ENCODE measurements at regions of chr17 and their contacts with region 1.

Region 1: GRCh38 chr17:31394544-31394943 is 3.1 kb downstream of the RAB11FIP4 start:
- DNase-seq: peak in 7 of 10 donors; percentile 20 to 77 (median 68)
- H3K4me3 ChIP-seq: peak overlapping the region in 48 of 59 donors; percentile 7 to 86 (median 70)
- H3K27ac ChIP-seq: peak overlapping the region in 24 of 59 donors; percentile 1 to 91 (median 82)
- H3K27me3 ChIP-seq: peaks cover 0 to 6% (median 0%) of the 10 kb centered on the region in 45 donors
- CTCF ChIP-seq: peak in 1 of 56 donors; percentile 15

Region 2: DNA sequence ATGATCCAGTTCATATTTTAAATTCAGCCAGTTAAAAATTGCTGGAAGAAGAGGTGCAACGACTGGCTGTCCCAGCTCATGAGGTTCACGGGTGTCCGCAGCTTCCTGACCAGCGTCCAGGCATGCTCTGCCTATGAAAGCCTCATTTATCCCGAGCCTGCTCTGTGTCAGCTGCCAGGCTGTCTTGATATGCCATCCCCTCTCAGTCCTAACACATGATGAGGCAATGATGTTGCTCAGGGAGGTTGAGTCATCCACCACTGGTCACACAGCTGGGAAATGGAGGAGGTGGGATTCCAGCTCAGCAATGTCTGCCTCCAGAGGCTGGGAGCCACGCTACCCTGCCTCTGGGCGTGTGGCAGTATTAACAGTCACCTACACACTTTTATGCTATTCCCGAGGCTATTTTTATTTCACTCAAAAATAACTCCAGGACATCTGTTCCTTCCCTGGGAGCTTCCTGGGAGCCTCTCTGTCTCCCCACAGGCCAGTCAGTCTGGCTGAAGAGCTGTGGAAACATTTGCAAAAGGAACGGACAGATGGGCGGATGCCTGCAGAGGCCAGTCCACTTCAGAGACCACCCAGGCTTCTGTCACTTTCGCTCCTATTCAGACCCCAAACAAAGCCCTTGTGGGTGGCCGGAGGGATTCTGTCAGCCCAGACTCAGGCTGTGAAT is 19.5 kb after region 1 on chr17:
- intact Hi-C with region 1: loop called in 1 of 2 experiments (anchors 2 kb)
- DNase-seq: peak in 9 of 10 donors; percentile 67 to 93 (median 92)
- H3K4me3 ChIP-seq: peak overlapping the region in 9 of 59 donors; percentile 5 to 24 (median 13)
- H3K27ac ChIP-seq: peak overlapping the region; percentile 76 to 99 (median 97)
- H3K27me3 ChIP-seq: no peaks in the 10 kb centered on the region
- CTCF ChIP-seq: peak in 6 of 56 donors; percentile 14 to 28 (median 22)

Measured in dorsolateral prefrontal cortex (tissue), 120 donors.